ENCODE measurements at regions of chr10 and their contacts with region 1.

Region 1: DNA sequence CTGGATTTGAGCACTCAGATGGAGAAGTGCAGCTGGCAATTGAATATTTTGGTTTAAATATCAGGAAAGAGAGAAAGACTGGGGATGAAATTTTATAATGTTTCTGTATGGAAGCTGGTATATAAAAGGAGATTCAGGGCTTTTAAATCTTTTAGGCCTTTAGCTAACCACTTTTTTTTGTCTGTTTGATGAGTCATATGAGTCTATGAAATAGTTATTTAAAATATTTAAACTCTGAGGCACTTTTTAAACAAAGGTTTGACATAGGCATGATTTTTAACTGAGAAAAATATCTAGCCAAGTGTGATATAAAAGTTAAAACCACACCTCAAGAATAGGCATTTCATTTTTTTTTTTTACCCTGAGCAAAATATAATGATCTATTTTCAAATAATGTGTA is 944.3 kb downstream of the GATA3 start:
- DNase-seq: no peak
- H3K4me3 ChIP-seq: no peak overlapping the region
- H3K27ac ChIP-seq: no peak overlapping the region
- H3K4me1 ChIP-seq: no peaks in the 10 kb centered on the region
- H3K27me3 ChIP-seq: no peaks in the 10 kb centered on the region
- CTCF ChIP-seq: no peak
- POLR2A ChIP-seq: no peak

Region 2: DNA sequence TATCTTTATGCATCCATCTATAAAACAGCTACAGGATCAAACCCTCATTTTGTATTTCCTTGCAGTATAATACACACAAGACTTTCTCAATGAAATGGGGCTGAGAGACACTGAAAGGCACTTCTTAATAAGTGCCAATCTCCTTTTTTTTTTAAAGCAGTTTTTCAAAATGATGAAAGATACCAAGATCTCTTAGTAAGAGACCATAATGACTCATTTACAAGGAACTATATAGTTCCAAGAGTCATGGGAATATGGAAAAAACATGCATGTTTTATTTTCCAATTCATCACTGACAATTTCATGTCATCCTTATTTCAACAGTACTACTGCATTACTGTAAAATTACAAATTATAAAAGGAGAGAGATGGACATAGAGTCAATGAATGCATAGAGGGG is 29.5 kb after region 1 on chr10:
- CTCF ChIA-PET with region 1: no interaction called
- POLR2A ChIA-PET with region 1: no interaction called
- dilution Hi-C with region 1: no loop called
- intact Hi-C with region 1: loop called (anchors 1 kb)
- DNase-seq: no peak
- H3K4me3 ChIP-seq: no peak overlapping the region
- H3K27ac ChIP-seq: no peak overlapping the region
- H3K4me1 ChIP-seq: no peaks in the 10 kb centered on the region
- H3K27me3 ChIP-seq: no peaks in the 10 kb centered on the region
- CTCF ChIP-seq: no peak
- POLR2A ChIP-seq: no peak